PC-3 (cell line): ENCODE measurements at regions of chr18 and their contacts with region 1.

Region 1: GRCh38 chr18:11963991-11964484 is 17.3 kb upstream of the IMPA2 start:
- DNase-seq: no peak
- ATAC-seq: peak; percentile 69
- H3K4me3 ChIP-seq: no peak overlapping the region
- H3K27ac ChIP-seq: no peak overlapping the region
- H3K4me1 ChIP-seq: no peaks in the 10 kb centered on the region
- H3K27me3 ChIP-seq: no peaks in the 10 kb centered on the region
- CTCF ChIP-seq: peak; percentile 35; the same call in 1 of the 2 replicates

Region 2: DNA sequence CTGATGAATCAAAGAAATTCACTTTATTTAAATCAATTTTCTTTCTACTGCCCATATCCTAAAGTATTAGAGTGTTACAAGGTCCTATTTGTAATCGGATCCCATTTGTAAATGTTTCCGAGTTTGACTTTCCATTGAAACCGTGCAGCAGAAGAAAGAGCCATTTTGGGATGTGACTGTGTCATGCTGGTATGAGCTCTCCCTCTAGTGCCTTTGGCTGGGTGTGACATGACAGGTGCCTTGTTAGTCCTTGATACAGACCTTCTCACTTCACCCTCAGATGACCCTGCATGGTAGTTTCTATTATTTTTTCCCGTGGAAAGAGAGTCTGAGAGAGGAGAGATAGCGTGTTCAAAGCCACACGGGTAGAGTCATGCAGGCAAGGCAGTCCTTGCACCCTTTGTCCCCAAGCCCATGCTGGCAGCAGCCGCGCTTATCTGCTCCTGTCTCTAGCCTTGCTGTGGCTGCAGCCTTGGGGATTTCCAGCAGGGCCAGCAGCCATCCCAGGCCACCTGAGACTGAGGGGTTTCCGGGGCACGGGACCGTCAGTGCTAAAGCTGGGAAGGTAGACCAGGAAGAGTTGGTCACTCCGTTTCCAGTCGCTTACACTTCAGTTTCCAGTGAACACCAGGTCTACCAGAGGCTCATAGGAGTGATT is 91.4 kb before region 1 on chr18:
- CTCF ChIA-PET with region 1: no interaction called
- POLR2A ChIA-PET with region 1: no interaction called
- intact Hi-C with region 1: no loop called
- DNase-seq: peak; percentile 74
- ATAC-seq: peak; percentile 98
- H3K4me3 ChIP-seq: peak overlapping the region; percentile 33; the same call in 1 of the 2 replicates
- H3K27ac ChIP-seq: no peak overlapping the region
- H3K4me1 ChIP-seq: peaks cover 11% of the 10 kb centered on the region
- H3K27me3 ChIP-seq: no peaks in the 10 kb centered on the region
- CTCF ChIP-seq: peak; percentile 89

Region 3: DNA sequence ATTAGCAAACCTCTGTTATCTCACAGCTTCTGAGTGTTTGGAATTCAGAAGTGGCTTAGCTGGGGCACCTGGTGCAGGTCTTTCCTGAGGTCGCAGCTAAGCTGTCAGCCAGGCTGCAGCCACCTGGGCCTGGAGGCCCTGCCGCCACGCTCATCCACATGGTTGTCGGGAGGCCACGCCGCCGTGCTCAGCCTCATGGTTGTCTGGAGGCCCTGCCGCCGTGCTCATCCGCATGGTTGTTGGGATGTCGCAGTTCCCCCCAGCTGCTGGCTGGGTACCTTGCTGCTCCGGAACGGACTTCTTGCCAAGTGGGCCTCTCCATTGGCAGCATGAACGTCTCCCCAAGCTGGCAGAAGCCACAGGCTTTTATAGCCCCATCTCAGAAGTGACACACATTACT is 31.6 kb before region 1 on chr18:
- CTCF ChIA-PET with region 1: no interaction called
- POLR2A ChIA-PET with region 1: interaction called, 28 read pairs
- intact Hi-C with region 1: no loop called
- DNase-seq: no peak
- ATAC-seq: no peak
- H3K4me3 ChIP-seq: no peak overlapping the region
- H3K27ac ChIP-seq: no peak overlapping the region
- H3K4me1 ChIP-seq: no peaks in the 10 kb centered on the region
- H3K27me3 ChIP-seq: no peaks in the 10 kb centered on the region
- CTCF ChIP-seq: no peak

Region 4: GRCh38 chr18:11937874-11938478 is 26.1 kb before region 1 on chr18:
- CTCF ChIA-PET with region 1: no interaction called
- POLR2A ChIA-PET with region 1: no interaction called
- intact Hi-C with region 1: loop called (anchors 1 kb)
- DNase-seq: peak; percentile 87
- ATAC-seq: peak; percentile 84
- H3K4me3 ChIP-seq: no peak overlapping the region
- H3K27ac ChIP-seq: no peak overlapping the region
- H3K4me1 ChIP-seq: no peaks in the 10 kb centered on the region
- H3K27me3 ChIP-seq: no peaks in the 10 kb centered on the region
- CTCF ChIP-seq: peak; percentile 91